ENCODE measurements at regions of chr6 and their contacts with region 1.

Region 1: GRCh38 chr6:13624871-13625288 is 9.7 kb downstream of the NOL7 start:
- H3K4me3 ChIP-seq: no peak overlapping the region
- H3K27ac ChIP-seq: no peak overlapping the region
- H3K4me1 ChIP-seq: no peaks in the 10 kb centered on the region
- CTCF ChIP-seq: no peak

Region 2: DNA sequence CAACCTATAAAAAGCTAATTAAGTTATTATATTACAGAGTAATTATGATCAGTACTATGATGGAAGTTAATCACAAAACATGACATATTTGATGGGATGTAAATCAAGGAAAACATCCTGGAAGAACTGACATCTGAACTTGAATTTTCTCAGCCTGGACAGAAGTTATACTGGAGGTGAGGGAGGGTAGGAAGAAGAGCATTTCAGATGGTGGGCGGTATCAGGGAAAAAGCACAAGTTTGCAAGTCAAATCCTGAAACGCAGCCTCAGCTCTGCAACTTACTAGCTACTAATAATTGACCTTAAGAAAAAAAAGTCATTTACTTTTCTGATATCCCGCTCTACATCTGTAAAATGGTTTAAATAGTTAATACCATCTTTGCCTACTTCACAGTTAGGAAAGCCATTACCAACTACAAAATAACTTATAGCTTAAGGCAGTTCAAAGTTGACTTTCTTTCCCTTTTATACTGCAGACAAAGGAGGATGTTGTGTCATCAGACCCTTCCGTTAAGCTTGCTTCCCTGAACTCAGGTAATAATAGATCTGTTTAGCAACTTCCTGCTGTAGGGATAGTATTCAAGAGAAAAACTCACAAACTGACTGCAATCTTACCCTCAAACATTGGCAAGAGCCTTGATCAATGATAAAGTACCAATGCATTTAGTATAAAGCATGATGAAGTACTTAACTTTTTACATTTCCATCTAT is 11.2 kb after region 1 on chr6:
- CTCF ChIA-PET with region 1: interaction called, 26 read pairs
- POLR2A ChIA-PET with region 1: interaction called, 6 read pairs
- H3K4me3 ChIP-seq: no peak overlapping the region
- H3K27ac ChIP-seq: no peak overlapping the region
- H3K4me1 ChIP-seq: no peaks in the 10 kb centered on the region
- CTCF ChIP-seq: no peak

Region 3: GRCh38 chr6:13653296-13653695 is 28.4 kb after region 1 on chr6:
- CTCF ChIA-PET with region 1: interaction called, 11 read pairs
- POLR2A ChIA-PET with region 1: no interaction called
- H3K4me3 ChIP-seq: no peak overlapping the region
- H3K27ac ChIP-seq: no peak overlapping the region
- H3K4me1 ChIP-seq: peaks cover 12% of the 10 kb centered on the region; the same call in 1 of the 2 replicates
- CTCF ChIP-seq: no peak